Activated T-helper 1 cell treated with anti-CD3 and anti-CD28 coated beads, Interleukin-12 subunit alpha, Interleukin-12 subunit beta, Interleukin-2, Interleukin-4 antibody, amounts not matched to agents 30 ng/mL and 10 ng/mL and 1 ng/mL, durations not matched to agents 14 hours and 24 hours and 36 hours (primary cell): ENCODE measurements at regions of chr3 and their contacts with region 1.

Region 1: DNA sequence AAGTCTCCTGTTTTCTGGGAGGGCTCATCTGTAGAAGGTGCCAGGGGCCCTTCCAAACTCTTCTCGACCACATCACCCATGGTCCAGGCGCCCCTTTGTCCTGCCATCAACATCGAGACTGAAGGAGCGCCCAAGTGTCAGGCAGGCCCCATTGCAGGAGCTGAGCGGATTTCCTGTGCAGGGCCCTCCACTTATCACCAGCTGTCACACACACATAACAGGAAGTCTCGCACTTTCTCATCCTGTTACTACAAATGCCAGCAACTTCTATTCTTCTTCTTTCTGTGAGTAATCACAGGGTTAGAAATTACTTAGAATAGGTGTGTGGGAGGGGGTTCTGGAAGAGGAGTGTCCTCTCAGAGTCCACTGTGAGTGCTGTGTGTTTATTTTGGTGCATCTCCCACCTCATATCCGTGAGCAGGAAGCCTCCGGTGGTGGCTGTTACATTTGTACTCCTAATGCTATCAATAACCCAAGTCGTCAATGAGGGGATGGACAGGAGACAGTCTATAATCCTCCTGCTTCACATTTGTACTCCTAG is at the start of gene KLHL6:
- DNase-seq: peak; percentile 71
- H3K4me3 Mint-ChIP-seq: peak within 1 kb of the TSS; percentile 97
- H3K27ac Mint-ChIP-seq: peak within 1 kb of the TSS; percentile 100
- H3K4me1 Mint-ChIP-seq: peaks cover 57% of the 10 kb centered on the region
- H3K27me3 Mint-ChIP-seq: no peaks in the 10 kb centered on the region
- total RNA-seq, gene KLHL6: 38.6 and 40.6 TPM in 2 replicates

Region 2: DNA sequence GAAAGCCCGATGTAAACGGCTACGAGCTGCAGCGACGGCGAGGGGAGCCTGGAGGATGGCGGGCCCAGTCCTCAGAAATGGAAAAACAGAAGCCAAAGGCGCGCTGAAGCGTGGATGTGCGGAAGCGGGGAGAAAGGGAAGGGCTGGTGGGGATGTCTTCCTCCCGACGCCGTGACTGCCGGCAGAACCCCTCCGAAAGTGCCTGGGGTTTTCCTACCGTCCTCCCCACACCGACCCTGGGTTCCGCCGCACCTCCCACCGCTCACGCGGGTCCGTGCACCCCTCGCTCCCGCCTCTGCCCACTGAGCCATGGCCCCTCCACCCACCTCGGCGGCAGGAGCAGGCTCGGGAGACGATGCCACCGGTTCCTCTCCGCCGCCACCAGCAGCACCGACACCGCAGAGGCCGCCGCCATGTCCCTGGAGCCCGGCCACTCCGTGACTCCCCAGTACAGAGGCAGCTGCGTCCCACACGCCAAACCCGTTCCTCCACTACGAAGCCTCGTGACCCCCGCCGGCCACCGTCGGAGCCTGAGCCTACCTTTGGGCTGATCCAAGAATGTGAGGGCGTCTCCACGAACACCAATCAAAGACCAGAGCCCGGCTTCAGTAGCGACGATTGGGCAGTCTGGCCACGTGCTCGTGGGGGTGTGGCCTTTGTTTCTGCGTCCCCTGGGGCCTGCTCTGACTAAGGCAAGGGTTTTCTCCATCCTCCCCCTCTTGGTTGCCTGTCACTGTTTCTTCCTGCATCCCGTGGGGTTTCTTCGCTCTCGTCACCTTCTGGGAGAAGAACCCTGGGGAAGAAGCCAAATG is 456.4 kb before region 1 on chr3 and contains the start of gene MCCC1:
- intact Hi-C with region 1: loop called (anchors 1 kb)
- DNase-seq: peak; percentile 97
- H3K4me3 Mint-ChIP-seq: peak within 1 kb of the TSS; percentile 97
- H3K27ac Mint-ChIP-seq: peak within 1 kb of the TSS; percentile 92
- H3K4me1 Mint-ChIP-seq: peaks cover 41% of the 10 kb centered on the region
- H3K27me3 Mint-ChIP-seq: no peaks in the 10 kb centered on the region
- total RNA-seq, gene MCCC1: 27.3 and 30.0 TPM in 2 replicates

Region 3: DNA sequence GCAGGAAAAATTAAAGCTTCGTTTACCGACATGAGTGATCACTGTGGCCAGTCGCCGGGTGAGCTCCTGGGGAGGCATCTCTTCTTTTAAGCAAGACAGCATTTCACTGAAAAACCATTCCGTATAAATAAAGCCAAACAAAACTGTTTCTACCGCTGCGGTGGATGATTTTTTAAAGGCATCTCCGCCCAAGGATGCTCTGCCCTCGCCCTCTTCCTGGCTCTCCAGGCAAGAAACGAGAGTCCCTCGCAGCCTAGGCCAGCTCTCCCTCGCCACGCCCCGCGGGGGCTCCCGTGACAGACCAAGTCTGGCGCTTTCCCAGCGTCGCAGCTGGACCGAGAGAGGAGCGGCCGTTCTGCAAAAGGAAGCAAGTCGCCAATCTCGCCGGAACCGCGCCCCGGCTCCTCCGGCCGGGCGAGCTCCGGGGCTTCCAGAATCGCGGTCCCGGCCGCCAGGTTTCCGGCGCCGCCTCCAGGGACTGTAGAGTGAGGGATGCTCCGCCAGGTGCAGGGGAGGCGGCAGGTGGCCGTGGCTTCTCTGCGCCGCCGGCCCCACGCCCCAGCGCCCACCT is 127.7 kb before region 1 on chr3:
- intact Hi-C with region 1: loop called (anchors 1 kb)
- DNase-seq: peak; percentile 14
- H3K4me3 Mint-ChIP-seq: peak overlapping the region; percentile 82
- H3K27ac Mint-ChIP-seq: peak overlapping the region; percentile 42
- H3K4me1 Mint-ChIP-seq: peaks cover 33% of the 10 kb centered on the region
- H3K27me3 Mint-ChIP-seq: peaks cover 9% of the 10 kb centered on the region

Region 4: DNA sequence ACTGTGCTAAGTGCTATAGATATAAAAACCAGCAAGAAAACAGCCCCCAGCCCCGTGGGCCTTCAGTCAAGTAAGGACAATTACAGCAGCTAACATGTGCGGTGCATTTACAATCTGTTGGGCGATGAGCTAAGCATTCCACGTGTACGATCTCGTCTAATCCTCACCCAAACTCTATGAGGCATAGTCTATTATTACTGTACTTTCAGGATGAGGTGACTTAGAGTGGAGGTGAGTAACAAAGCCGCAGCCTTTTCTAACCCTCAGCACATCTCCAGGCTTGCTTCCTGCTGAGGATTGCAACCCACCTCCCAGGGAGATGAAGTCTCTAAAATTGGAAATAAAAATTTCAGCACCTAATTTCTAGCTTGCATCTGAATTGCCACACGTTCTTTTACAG is 74.0 kb before region 1 on chr3:
- intact Hi-C with region 1: loop called (anchors 2 kb)
- DNase-seq: no peak
- H3K4me3 Mint-ChIP-seq: no peak overlapping the region
- H3K27ac Mint-ChIP-seq: no peak overlapping the region
- H3K4me1 Mint-ChIP-seq: peaks cover 10% of the 10 kb centered on the region
- H3K27me3 Mint-ChIP-seq: no peaks in the 10 kb centered on the region

Region 5: DNA sequence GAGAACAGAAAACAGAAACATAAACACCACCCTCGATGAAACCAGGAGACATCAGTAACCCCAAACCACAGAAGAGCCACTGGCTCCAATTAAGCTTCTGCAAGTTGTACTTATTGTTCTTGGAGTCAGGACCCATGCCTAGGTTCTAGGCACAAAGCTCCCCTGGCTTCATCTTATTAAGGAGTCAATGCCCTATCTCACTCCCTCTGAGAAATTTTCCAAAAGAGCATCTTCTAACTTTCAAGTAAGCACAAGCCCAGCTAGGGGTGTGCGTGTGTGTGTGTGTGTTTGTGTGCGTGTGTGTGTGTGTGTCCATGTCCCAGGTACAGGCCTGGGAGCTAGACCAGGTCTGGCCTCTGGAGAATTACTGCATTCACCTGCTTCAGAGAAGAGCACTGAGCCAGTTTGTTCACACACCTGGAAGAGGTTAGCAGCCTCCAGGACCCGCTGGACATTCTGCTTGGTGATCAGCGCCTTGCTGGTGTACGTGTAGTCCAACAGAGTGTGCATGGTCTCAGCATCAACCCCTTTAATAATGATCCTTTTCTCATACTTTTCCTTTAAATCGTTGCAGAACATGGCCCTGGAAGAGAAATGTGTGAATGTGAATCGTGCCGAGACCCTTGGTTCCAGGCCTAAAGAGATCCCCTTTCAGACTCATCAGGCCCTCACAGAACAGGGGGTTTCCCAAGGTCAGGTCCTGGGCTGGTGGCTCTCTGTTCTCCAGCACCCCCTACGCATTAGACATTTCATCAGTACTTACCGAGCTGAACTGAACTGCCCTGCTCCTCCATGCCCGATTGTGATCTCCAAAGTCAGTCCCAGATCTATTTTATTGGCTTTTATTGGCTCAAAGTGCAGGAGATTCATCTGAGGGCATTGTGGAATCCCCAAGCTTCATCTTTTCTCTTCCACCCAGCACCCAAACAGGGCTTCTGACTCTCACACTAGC is 27.9 kb before region 1 on chr3:
- intact Hi-C with region 1: loop called (anchors 1 kb)
- DNase-seq: peak; percentile 15
- H3K4me3 Mint-ChIP-seq: peak overlapping the region; percentile 55
- H3K27ac Mint-ChIP-seq: peak overlapping the region; percentile 82
- H3K4me1 Mint-ChIP-seq: peaks cover 51% of the 10 kb centered on the region
- H3K27me3 Mint-ChIP-seq: no peaks in the 10 kb centered on the region

Region 6: GRCh38 chr3:183591881-183592521 is 36.4 kb after region 1 on chr3:
- intact Hi-C with region 1: loop called (anchors 1 kb)
- DNase-seq: no peak
- H3K4me3 Mint-ChIP-seq: no peak overlapping the region
- H3K27ac Mint-ChIP-seq: peak overlapping the region; percentile 30
- H3K4me1 Mint-ChIP-seq: peaks cover 39% of the 10 kb centered on the region
- H3K27me3 Mint-ChIP-seq: no peaks in the 10 kb centered on the region

Region 7: GRCh38 chr3:183766745-183767606 is 211.4 kb after region 1 on chr3:
- intact Hi-C with region 1: loop called (anchors 2 kb)
- DNase-seq: peak; percentile 63
- H3K4me3 Mint-ChIP-seq: no peak overlapping the region
- H3K27ac Mint-ChIP-seq: no peak overlapping the region
- H3K4me1 Mint-ChIP-seq: peaks cover 7% of the 10 kb centered on the region
- H3K27me3 Mint-ChIP-seq: no peaks in the 10 kb centered on the region

Region 8: GRCh38 chr3:183966251-183966801 is 410.7 kb after region 1 on chr3:
- intact Hi-C with region 1: no loop called
- DNase-seq: no peak
- H3K4me3 Mint-ChIP-seq: no peak overlapping the region
- H3K27ac Mint-ChIP-seq: no peak overlapping the region
- H3K4me1 Mint-ChIP-seq: no peaks in the 10 kb centered on the region
- H3K27me3 Mint-ChIP-seq: no peaks in the 10 kb centered on the region